ENCODE measurements at regions of chr5 and their contacts with region 1.

Region 1: GRCh38 chr5:36739751-36740221 is 133.4 kb downstream of the SLC1A3 start:
- H3K4me3 ChIP-seq: no peak overlapping the region
- H3K27ac ChIP-seq: no peak overlapping the region
- H3K4me1 ChIP-seq: peaks cover 12% of the 10 kb centered on the region
- CTCF ChIP-seq: peak; percentile 75; the same call in 1 of the 2 replicates

Region 2: GRCh38 chr5:36630201-36631145 is 109.3 kb before region 1 on chr5:
- CTCF ChIA-PET with region 1: no interaction called
- POLR2A ChIA-PET with region 1: no interaction called
- H3K4me3 ChIP-seq: no peak overlapping the region
- H3K27ac ChIP-seq: no peak overlapping the region
- H3K4me1 ChIP-seq: no peaks in the 10 kb centered on the region
- CTCF ChIP-seq: no peak

Region 3: DNA sequence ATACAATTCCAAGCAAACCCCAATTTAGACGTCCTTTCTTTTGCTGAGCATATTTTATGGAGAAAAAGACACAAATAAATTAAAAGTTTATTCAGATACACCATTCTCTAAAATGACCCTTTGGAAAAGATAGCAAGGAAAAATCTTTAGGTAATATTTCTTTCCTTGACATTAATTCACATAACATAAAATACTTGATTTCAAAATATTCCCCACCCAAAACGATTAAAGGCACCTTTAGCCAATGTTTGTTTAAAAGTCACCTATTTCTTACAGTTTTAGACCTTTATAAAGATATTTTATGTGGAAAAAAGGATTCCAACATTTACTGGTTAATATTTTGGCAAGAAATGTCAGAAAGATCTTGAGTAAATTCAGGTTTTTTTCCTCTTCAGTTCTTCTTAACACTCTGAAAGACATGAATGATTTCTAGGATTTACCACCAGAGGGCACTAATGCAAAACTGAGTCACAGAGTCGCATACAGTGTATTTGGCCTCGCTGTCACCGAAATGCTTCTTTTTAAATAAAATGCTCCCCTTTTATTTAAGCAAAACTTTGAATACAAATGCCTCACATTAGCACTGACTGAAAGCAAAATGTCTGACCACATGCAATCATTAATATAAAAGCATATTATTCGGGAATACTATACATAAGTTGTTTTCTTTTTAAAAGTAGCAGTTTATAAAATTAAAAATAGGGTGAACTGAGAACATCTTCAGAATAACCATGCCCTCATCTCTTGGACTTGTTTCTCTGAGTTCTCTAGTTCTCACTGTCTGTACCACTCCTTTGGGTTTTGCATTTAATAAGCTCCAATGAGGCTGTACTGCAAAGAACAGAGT is 10.9 kb before region 1 on chr5:
- CTCF ChIA-PET with region 1: interaction called, 29 read pairs
- POLR2A ChIA-PET with region 1: interaction called, 3 read pairs
- H3K4me3 ChIP-seq: no peak overlapping the region
- H3K27ac ChIP-seq: no peak overlapping the region
- H3K4me1 ChIP-seq: no peaks in the 10 kb centered on the region
- CTCF ChIP-seq: no peak

Region 4: GRCh38 chr5:36751886-36752285 is 12.1 kb after region 1 on chr5:
- CTCF ChIA-PET with region 1: interaction called, 21 read pairs
- POLR2A ChIA-PET with region 1: interaction called, 5 read pairs
- H3K4me3 ChIP-seq: no peak overlapping the region
- H3K27ac ChIP-seq: no peak overlapping the region
- H3K4me1 ChIP-seq: no peaks in the 10 kb centered on the region
- CTCF ChIP-seq: no peak

Region 5: GRCh38 chr5:36763454-36763853 is 23.7 kb after region 1 on chr5:
- CTCF ChIA-PET with region 1: interaction called, 11 read pairs
- POLR2A ChIA-PET with region 1: no interaction called
- H3K4me3 ChIP-seq: no peak overlapping the region
- H3K27ac ChIP-seq: no peak overlapping the region
- H3K4me1 ChIP-seq: no peaks in the 10 kb centered on the region
- CTCF ChIP-seq: no peak

Region 6: GRCh38 chr5:36870399-36871040 is 130.7 kb after region 1 on chr5:
- CTCF ChIA-PET with region 1: interaction called, 85 read pairs
- POLR2A ChIA-PET with region 1: interaction called, 22 read pairs
- H3K4me3 ChIP-seq: no peak overlapping the region
- H3K27ac ChIP-seq: no peak overlapping the region
- H3K4me1 ChIP-seq: peaks cover 8% of the 10 kb centered on the region; the same call in 1 of the 2 replicates
- CTCF ChIP-seq: peak; percentile 39; the same call in 1 of the 2 replicates

Region 7: DNA sequence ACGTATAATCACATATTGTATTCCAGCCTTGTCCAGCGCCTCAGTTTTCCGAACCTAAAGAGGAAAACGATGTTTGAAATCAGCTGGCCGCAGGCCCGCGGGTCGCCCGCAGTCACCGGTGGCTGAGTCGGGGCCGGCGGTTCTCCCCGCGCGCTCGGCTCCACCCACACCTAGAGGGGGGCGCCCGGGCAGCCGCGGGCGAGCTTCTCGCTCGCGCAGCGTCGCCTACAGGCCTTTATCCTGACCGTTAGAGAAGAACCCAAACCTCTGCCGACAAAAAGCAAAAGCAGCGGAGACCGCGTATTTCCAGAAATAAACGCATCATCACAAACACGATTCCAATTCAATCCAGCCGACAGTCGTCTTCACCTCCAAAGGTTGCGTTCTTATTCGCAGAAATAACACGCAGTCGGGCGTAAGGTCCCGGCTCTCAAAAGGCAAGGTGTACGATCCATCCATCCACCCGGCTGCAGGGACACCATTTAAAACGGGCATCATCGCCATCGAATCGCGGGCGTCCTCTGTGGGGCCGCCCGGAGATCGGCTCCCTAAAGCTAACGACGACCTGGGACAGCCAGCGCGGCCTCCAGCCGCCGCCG is 136.1 kb after region 1 on chr5:
- CTCF ChIA-PET with region 1: interaction called, 85 read pairs
- POLR2A ChIA-PET with region 1: interaction called, 22 read pairs
- H3K4me3 ChIP-seq: peak overlapping the region; percentile 95
- H3K27ac ChIP-seq: peak overlapping the region; percentile 99
- H3K4me1 ChIP-seq: peaks cover 18% of the 10 kb centered on the region
- CTCF ChIP-seq: peak; percentile 92

Region 8: DNA sequence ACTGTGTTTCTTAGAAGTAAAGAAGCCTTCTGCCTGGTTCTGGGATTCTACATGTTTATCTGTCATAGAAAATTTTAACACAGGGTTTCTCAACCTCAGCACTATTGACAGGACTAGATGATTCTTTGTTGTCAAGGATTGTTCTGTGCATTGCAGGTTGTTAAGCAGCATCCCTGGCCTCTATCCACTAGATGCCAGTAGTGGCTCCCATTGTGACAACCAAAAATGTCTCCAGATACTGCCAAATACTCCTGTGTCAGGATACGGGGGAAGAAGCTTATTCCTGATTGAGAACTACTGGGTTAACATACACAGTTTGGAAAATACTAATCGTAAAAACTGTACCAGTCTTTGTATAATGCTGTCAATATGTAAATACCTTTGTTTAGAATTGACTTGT is 303.9 kb after region 1 on chr5:
- CTCF ChIA-PET with region 1: no interaction called
- POLR2A ChIA-PET with region 1: no interaction called
- H3K4me3 ChIP-seq: no peak overlapping the region
- H3K27ac ChIP-seq: no peak overlapping the region
- H3K4me1 ChIP-seq: no peaks in the 10 kb centered on the region; the same call in 1 of the 2 replicates
- CTCF ChIP-seq: no peak